ENCODE measurements at regions of chr3 and their contacts with region 1.

Region 1: DNA sequence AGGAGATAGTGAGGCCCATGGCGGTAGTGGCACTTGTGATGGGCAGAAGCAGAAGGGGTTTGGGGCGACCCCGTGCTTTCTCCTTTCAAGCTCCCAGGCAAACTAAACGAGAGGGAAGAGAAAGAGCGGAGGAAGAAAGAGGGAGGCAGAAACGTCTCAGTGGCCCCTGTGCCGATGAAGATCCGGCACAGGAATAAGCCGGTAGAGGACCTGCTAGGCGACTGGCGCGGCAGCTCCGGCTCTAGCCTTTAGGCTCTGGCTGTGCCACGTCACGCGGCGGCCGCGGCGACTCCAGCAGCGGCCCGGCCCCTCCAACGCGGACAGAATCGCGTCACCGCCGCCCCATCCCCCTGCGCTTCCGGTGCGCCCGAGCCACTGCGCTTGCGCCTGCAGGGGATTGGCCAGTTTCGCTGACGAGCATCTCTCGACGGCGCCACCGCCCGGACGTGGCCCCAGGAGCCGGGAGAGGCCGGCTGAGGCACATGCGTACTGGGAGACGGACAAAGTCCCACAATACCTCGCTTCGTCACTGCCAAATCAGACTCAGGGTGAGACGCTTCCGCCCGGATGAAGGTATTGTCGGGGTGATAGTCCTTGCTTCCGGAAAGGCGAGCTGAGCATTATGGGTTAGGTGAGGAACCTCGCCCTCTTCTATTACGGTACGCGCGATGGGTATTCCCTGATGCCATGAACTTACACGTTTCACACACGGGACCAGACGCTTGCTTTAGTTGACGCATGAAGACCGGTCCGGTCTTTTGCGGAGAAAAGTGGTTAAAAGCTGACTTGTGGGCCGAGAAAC is at the start of gene ARF4:
- DNase-seq: peak; percentile 99
- ATAC-seq: peak; percentile 92
- H3K4me3 ChIP-seq: peak within 1 kb of the TSS; percentile 83 to 100
- H3K27ac ChIP-seq: peak within 1 kb of the TSS; percentile 94
- H3K4me1 ChIP-seq: peaks cover 5 to 17% of the 10 kb centered on the region in 2 experiments; a peak in 3 of 4 replicates
- H3K27me3 ChIP-seq: no peaks in the 10 kb centered on the region
- CTCF ChIP-seq: no peak
- POLR2A ChIP-seq: peak; percentile 93
- RAD21 ChIP-seq: no peak
- total RNA-seq, gene ARF4: 112 TPM

Region 2: GRCh38 chr3:57755668-57756527 is 158.6 kb after region 1 on chr3 and contains the start of gene SLMAP:
- CTCF ChIA-PET with region 1: no interaction called
- POLR2A ChIA-PET with region 1: interaction called, 4 read pairs
- RAD21 ChIA-PET with region 1: no interaction called
- intact Hi-C with region 1: loop called (anchors 1 kb)
- DNase-seq: peak; percentile 96
- ATAC-seq: peak; percentile 86
- H3K4me3 ChIP-seq: peak within 1 kb of the TSS; percentile 79 to 82
- H3K27ac ChIP-seq: peak within 1 kb of the TSS; percentile 82
- H3K4me1 ChIP-seq: peaks cover 33 to 62% of the 10 kb centered on the region in 2 experiments
- H3K27me3 ChIP-seq: no peaks in the 10 kb centered on the region
- CTCF ChIP-seq: no peak
- POLR2A ChIP-seq: peak; percentile 57
- RAD21 ChIP-seq: no peak
- total RNA-seq, gene SLMAP: 81.0 TPM

Region 3: GRCh38 chr3:57803647-57804081 is 206.3 kb after region 1 on chr3:
- CTCF ChIA-PET with region 1: no interaction called
- POLR2A ChIA-PET with region 1: no interaction called
- RAD21 ChIA-PET with region 1: no interaction called
- intact Hi-C with region 1: loop called (anchors 1 kb)
- DNase-seq: peak; percentile 96
- ATAC-seq: peak; percentile 75
- H3K4me3 ChIP-seq: peak overlapping the region in 1 of 2 experiments; percentile 27; a peak in 2 of 4 replicates
- H3K27ac ChIP-seq: peak overlapping the region; percentile 77
- H3K4me1 ChIP-seq: peaks cover 49 to 66% of the 10 kb centered on the region in 2 experiments
- H3K27me3 ChIP-seq: no peaks in the 10 kb centered on the region
- CTCF ChIP-seq: no peak
- POLR2A ChIP-seq: no peak
- RAD21 ChIP-seq: peak; percentile 33

Region 4: DNA sequence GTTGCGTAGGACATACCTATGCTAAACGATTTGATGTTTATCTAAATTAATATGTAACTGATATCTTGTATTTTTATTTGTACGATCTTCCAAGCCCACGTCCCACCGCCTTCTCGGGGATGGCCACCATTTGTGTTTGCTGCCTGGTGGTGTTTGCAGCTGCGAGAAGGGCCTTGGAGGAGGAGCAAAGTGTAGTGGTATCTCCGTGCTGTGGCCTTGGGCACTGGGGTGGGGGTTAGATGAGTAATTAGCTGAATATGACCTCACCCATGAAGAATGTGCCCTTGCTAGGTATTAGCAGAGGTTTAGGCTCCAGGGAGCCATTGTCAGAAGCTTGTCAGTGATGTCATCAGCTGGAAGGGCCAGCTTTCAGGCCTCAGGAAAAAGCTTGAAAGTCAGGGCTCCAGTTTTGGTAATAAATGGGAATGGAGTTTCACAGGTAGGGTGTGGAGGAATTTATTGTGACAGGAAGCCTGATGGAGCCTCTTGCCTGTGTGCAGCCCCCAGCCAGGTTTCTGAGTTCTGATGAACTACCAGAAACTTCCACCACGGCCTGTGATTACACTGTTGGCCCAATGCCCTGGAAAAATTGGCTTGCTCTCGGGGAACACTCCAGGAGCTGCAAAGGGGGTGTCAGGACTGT is 451.9 kb after region 1 on chr3:
- CTCF ChIA-PET with region 1: no interaction called
- POLR2A ChIA-PET with region 1: no interaction called
- RAD21 ChIA-PET with region 1: no interaction called
- intact Hi-C with region 1: loop called (anchors 5 kb)
- DNase-seq: peak; percentile 95
- ATAC-seq: peak; percentile 75
- H3K4me3 ChIP-seq: peak overlapping the region in 1 of 2 experiments; percentile 32; a peak in 2 of 4 replicates
- H3K27ac ChIP-seq: peak overlapping the region; percentile 57
- H3K4me1 ChIP-seq: peaks cover 59 to 88% of the 10 kb centered on the region in 2 experiments
- H3K27me3 ChIP-seq: no peaks in the 10 kb centered on the region
- CTCF ChIP-seq: no peak
- POLR2A ChIP-seq: no peak
- RAD21 ChIP-seq: peak; percentile 32; the same call in 1 of the 2 replicates